ENCODE measurements at regions of chr5 and their contacts with region 1.

Region 1: DNA sequence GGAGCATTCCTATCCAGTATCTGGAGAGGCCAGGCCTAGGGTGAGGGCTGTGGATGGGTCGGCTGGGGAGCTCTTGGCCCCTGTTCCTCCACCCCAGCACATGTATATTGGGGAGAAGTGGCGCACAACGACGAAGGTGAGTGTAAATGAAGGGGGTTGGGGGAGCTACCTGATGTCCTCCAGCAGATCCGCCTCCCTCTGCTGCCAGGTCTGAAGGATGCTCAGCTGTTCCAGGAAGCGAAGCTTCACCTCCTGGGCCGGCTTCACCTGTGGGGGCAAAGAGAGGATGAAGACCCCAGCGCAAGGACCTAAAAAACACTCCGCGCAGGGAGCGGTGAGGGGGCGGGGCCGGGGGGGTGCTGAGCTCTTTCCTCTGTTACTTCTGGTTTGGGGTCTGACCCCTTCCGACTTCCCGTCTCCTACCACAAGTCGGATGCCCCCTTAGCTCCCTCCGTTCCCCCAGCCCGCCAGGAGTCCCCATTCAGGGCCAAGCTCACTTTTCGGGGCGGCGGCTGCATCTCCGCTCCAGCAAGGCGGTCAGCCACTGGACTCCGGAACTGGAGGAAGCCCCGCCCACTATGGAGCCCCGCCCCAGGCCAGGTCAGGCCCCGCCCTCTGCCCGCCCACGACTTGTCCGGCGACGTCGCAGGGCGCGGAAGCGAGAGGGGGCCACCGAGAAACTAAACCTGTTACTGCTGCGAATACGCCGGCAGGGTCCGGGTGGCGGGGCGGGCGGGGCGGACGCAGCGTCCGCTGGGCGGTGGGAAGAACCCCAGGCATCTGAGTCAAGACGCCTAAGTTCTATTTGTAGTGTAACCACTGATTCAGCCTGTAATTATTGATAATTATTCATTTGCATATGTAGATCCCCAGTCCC is at the start of gene FCHSD1:
- DNase-seq: peak; percentile 83
- ATAC-seq: peak; percentile 99
- H3K4me3 Mint-ChIP-seq: peak within 1 kb of the TSS; percentile 98
- H3K27ac Mint-ChIP-seq: peak within 1 kb of the TSS; percentile 96
- H3K4me1 Mint-ChIP-seq: peaks cover 29% of the 10 kb centered on the region
- H3K27me3 Mint-ChIP-seq: peaks cover 3% of the 10 kb centered on the region
- CTCF ChIP-seq: no peak
- total RNA-seq, gene FCHSD1: 63.2 and 79.5 TPM in 2 replicates

Region 2: DNA sequence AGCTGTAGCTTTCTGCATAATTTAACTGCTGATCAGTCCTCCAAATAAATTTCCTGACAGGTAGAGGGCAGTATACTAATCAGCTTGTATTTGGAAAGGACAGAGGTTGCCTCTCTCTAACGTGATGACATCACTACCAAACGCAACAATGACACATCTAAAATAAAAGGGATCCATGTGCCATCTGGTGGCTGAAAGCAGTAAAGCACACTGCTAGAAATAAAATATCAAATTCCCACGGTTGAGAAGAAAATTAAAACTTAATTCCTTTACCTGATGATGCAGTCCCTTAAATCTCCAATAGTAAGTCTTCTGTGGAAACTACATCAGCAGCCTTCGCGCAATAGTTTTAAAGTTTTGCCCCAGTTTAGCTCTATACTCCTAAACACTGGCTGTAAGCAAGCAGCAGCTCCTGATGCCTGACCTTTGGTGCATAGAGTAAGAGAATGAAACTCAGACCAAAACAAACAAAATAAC is 86.8 kb before region 1 on chr5:
- CTCF ChIA-PET with region 1: no interaction called
- POLR2A ChIA-PET with region 1: no interaction called
- intact Hi-C with region 1: no loop called
- DNase-seq: no peak
- ATAC-seq: peak; percentile 98
- H3K4me3 Mint-ChIP-seq: no peak overlapping the region
- H3K27ac Mint-ChIP-seq: peak overlapping the region; percentile 80
- H3K4me1 Mint-ChIP-seq: peaks cover 7% of the 10 kb centered on the region
- H3K27me3 Mint-ChIP-seq: no peaks in the 10 kb centered on the region
- CTCF ChIP-seq: peak; percentile 92

Region 3: GRCh38 chr5:141681695-141682641 is 30.9 kb after region 1 on chr5 and contains the start of gene ARAP3:
- CTCF ChIA-PET with region 1: no interaction called
- POLR2A ChIA-PET with region 1: interaction called, 15 read pairs
- intact Hi-C with region 1: loop called (anchors 2 kb)
- DNase-seq: peak; percentile 50
- ATAC-seq: peak; percentile 81
- H3K4me3 Mint-ChIP-seq: peak within 1 kb of the TSS; percentile 79
- H3K27ac Mint-ChIP-seq: no peak within 1 kb of the TSS
- H3K4me1 Mint-ChIP-seq: peaks cover 23% of the 10 kb centered on the region
- H3K27me3 Mint-ChIP-seq: peaks cover 3% of the 10 kb centered on the region
- CTCF ChIP-seq: no peak
- total RNA-seq, gene ARAP3: 0.44 and 0.49 TPM in 2 replicates

Measured in activated B cell treated with CpG ODN at 0.5 μM for 24 hours (primary cell).